ENCODE measurements at regions of chr10 and their contacts with region 1.

Region 1: DNA sequence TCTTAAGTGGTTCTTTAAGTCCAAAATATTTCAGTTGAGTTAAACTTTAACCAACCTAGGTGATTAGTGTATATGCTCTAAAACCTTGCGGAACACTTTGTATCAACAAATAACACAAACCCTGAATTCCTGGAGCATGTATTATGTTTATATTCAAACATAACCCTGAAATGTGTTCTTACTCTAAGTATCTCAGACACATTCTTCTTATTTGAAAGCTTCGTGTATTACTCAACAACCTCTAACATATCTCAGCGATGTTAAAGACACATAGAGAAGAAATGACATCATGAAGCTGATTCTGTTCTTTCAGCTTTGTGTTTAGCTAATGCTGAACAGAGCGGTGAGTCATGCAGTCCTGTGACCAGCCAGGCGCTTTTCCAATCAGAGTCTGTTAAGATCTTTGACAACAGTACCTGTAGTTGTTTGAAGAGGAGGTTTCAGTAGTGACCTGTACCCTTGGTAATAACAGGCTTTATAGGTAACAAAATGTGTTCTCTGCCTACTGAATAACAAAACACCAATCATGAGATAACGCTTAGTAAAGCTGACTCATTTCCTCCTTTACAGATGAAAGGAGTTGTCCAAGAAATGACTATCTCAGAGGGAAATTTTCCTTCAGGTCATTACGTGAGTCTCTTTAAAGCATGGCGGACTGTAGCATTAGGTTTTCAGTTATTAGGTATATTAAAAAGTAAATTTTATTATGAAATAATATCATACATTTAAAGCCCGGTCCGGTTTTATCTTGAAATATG is 67.3 kb upstream of the KLF6 start:
- DNase-seq: peak; percentile 85
- ATAC-seq: peak; percentile 92
- H3K4me3 Mint-ChIP-seq: peak overlapping the region; percentile 36
- H3K27ac Mint-ChIP-seq: peak overlapping the region; percentile 91
- H3K4me1 Mint-ChIP-seq: peaks cover 47% of the 10 kb centered on the region
- H3K27me3 Mint-ChIP-seq: no peaks in the 10 kb centered on the region
- CTCF ChIP-seq: no peak

Region 2: GRCh38 chr10:3623746-3624145 is 228.6 kb before region 1 on chr10:
- CTCF ChIA-PET with region 1: no interaction called
- POLR2A ChIA-PET with region 1: no interaction called
- intact Hi-C with region 1: no loop called
- DNase-seq: no peak
- ATAC-seq: no peak
- H3K4me3 Mint-ChIP-seq: no peak overlapping the region
- H3K27ac Mint-ChIP-seq: peak overlapping the region; percentile 80
- H3K4me1 Mint-ChIP-seq: peaks cover 31% of the 10 kb centered on the region
- H3K27me3 Mint-ChIP-seq: peaks cover 1% of the 10 kb centered on the region
- CTCF ChIP-seq: no peak

Region 3: GRCh38 chr10:3835770-3836169 is 16.6 kb before region 1 on chr10:
- CTCF ChIA-PET with region 1: interaction called, 3 read pairs
- POLR2A ChIA-PET with region 1: interaction called, 11 read pairs
- intact Hi-C with region 1: no loop called
- DNase-seq: no peak
- ATAC-seq: peak; percentile 37
- H3K4me3 Mint-ChIP-seq: no peak overlapping the region
- H3K27ac Mint-ChIP-seq: peak overlapping the region; percentile 67
- H3K4me1 Mint-ChIP-seq: peaks cover 54% of the 10 kb centered on the region
- H3K27me3 Mint-ChIP-seq: no peaks in the 10 kb centered on the region
- CTCF ChIP-seq: no peak

Region 4: DNA sequence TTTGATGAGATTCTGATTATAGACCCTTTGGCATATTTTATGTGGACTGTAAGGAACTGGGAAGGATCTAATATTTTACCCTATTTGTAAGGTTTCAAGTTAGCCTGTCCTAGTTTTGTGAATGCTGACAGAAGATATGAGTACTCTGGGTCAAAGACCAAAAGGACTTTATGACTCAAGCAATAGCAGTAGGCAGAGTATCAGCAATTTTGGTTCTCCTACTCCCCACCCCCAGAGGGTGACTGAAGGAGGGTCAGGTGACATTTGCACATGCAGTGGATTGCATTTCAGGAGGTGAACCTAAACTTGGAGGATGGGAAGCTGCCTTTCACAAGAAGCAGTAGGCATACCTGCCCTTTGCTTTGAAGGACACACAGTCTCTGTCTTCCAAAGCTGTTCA is 16.7 kb after region 1 on chr10:
- CTCF ChIA-PET with region 1: interaction called, 4 read pairs
- POLR2A ChIA-PET with region 1: interaction called, 16 read pairs
- intact Hi-C with region 1: no loop called
- DNase-seq: no peak
- ATAC-seq: peak; percentile 18
- H3K4me3 Mint-ChIP-seq: no peak overlapping the region
- H3K27ac Mint-ChIP-seq: peak overlapping the region; percentile 53
- H3K4me1 Mint-ChIP-seq: peaks cover 63% of the 10 kb centered on the region
- H3K27me3 Mint-ChIP-seq: no peaks in the 10 kb centered on the region
- CTCF ChIP-seq: no peak